ENCODE measurements at regions of chr2 and their contacts with region 1.

Region 1: GRCh38 chr2:54255230-54256090 is 569 bp downstream of the TSPYL6 start:
- DNase-seq: no peak
- ATAC-seq: no peak
- H3K4me3 Mint-ChIP-seq: no peak overlapping the region
- H3K27ac Mint-ChIP-seq: no peak overlapping the region
- H3K4me1 Mint-ChIP-seq: no peaks in the 10 kb centered on the region
- H3K27me3 Mint-ChIP-seq: no peaks in the 10 kb centered on the region
- CTCF ChIP-seq: no peak

Region 2: DNA sequence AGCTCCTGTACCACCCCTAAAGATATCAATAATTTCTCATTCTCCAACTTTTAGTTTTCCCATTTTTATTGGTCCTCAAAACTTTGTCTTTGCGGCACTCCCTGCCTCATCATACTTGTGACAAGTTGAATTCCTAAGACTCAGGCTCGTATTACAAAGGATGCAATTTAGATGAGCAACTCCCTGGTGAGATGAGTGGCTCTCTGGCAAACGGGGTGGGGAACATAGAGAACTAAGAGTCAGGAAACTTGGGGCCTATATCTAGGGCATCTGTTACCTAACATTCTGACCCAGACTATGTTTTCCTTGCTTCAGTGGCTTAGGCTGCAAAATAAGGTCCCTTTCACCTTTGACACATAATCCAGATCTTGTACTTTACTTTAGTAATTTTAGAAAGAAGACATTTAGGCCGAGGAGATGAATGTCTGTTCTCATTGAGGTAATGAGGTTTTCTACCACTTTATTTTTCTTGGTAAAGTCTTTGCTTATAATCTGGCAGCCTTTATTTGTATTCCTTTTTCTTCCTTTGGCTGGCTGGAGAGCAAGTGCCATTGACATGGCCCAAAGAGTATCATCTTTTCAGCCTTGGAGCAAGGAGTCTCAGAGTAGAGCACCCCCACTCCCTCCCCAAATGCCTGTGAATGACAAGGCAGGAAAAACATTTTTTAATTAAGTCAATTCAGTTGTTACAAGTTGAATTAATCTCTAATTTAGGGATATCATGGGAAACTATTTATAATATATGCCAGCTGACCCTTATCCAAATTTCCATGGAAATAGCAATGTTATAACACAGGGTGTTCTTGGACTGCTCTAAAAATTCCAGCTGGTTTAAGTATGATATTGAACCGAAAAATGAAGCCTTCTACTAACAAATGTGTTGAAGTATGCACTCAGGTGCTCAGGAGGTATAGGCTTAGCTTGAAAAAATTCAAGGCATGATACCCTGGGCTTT is 14.7 kb before region 1 on chr2:
- CTCF ChIA-PET with region 1: no interaction called
- POLR2A ChIA-PET with region 1: no interaction called
- intact Hi-C with region 1: loop called (anchors 1 kb)
- DNase-seq: no peak
- ATAC-seq: no peak
- H3K4me3 Mint-ChIP-seq: no peak overlapping the region
- H3K27ac Mint-ChIP-seq: no peak overlapping the region
- H3K4me1 Mint-ChIP-seq: no peaks in the 10 kb centered on the region
- H3K27me3 Mint-ChIP-seq: no peaks in the 10 kb centered on the region
- CTCF ChIP-seq: no peak